Activated naive CD4-positive, alpha-beta T cell treated with anti-CD3 and anti-CD28 coated beads for 36 hours (primary cell): ENCODE measurements at regions of chr21 and their contacts with region 1.

Region 1: DNA sequence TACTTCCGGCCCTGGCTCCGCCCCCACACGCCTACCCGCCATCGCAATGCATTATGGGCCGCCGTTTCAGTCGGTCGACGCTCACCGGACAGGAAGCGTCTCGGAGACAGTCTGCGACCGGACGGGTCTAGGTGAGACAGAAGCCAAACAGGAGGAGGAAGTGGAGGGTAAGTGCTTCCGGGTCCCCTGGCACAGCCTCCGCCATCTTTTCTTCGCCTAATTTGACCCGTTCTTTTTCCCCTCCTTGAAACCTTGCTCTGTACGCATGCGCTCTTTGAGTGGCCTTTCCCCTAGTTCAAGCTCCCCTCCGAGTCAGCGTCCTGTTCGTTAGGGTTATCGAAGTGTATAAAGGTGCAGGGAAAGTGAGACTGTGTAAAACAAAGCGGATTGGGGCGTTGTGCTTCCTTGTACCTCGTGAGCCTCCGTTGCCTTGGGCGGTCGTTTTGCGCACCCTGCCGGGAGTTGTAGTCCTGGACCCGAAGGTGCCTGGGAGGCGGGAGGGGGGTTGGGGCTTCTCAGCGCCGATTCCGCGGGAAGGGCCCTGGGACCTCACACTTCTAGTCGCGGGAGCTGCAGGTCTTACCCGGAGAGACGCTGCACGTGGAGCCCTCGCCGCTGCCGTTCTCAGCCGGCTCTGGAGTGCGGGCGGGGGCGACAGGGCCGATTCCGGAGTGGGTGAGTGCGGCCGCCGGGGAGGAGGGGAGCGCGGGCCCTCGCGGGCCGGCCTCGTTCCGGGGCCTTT is at the starts of genes ATP5PF and GABPA:
- DNase-seq: peak; percentile 99
- H3K4me3 Mint-ChIP-seq: peak within 1 kb of the TSS; percentile 94
- H3K27ac Mint-ChIP-seq: peak within 1 kb of the TSS; percentile 99
- H3K4me1 Mint-ChIP-seq: peaks cover 48% of the 10 kb centered on the region
- H3K27me3 Mint-ChIP-seq: no peaks in the 10 kb centered on the region
- total RNA-seq, gene ATP5PF: 124 to 132 TPM
- total RNA-seq, gene GABPA: 18.5 to 21.2 TPM

Region 2: GRCh38 chr21:25457411-25457810 is 277.7 kb before region 1 on chr21:
- CTCF ChIA-PET with region 1: no interaction called
- intact Hi-C with region 1: loop called (anchors 1 kb)
- DNase-seq: no peak
- H3K4me3 Mint-ChIP-seq: peak overlapping the region; percentile 48
- H3K27ac Mint-ChIP-seq: peak overlapping the region; percentile 84
- H3K4me1 Mint-ChIP-seq: peaks cover 74% of the 10 kb centered on the region
- H3K27me3 Mint-ChIP-seq: no peaks in the 10 kb centered on the region

Region 3: GRCh38 chr21:25507522-25507921 is 227.6 kb before region 1 on chr21:
- CTCF ChIA-PET with region 1: no interaction called
- intact Hi-C with region 1: loop called (anchors 1 kb)
- DNase-seq: peak; percentile 55
- H3K4me3 Mint-ChIP-seq: no peak overlapping the region
- H3K27ac Mint-ChIP-seq: peak overlapping the region; percentile 70
- H3K4me1 Mint-ChIP-seq: peaks cover 75% of the 10 kb centered on the region
- H3K27me3 Mint-ChIP-seq: no peaks in the 10 kb centered on the region

Region 4: GRCh38 chr21:25573409-25574206 is 161.5 kb before region 1 on chr21:
- CTCF ChIA-PET with region 1: no interaction called
- intact Hi-C with region 1: loop called (anchors 1 kb)
- DNase-seq: peak; percentile 82
- H3K4me3 Mint-ChIP-seq: peak overlapping the region; percentile 72
- H3K27ac Mint-ChIP-seq: peak overlapping the region; percentile 95
- H3K4me1 Mint-ChIP-seq: peaks cover 73% of the 10 kb centered on the region
- H3K27me3 Mint-ChIP-seq: no peaks in the 10 kb centered on the region

Region 5: DNA sequence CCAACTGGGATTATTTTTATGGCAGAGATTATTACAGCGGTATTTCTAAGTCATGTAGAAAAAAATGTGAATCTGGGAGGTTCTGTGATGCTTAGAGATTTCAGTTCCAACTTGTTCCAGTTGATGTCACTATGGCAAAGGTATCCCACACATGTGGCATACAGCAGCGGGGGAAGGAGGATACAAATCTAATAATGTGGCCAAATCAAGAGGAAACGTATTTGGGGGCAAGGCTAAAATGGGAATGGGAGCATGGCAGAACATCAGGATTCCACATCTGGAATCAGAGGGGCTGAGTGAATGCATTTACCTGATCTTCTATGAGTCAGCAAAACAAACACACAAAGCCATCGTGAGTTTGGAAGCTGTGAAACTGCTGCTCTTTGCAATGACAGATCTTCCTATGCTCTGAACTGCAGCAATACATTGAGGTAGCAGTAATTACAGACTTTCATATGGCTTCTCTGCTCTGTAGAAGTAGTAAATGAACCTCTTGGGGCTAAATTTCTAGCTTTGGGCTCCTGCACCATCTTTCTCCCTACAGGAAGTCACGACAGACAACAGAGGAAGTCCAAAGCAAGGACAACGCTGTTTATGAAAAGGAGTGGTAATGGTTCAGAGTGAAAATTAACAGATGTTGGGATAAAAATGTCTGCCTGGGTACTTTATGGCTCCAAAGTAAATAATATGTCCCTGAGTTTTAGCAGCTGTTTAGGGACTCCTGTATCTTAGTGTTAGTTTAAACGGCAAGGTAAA is 55.2 kb after region 1 on chr21:
- CTCF ChIA-PET with region 1: no interaction called
- intact Hi-C with region 1: loop called (anchors 1 kb)
- DNase-seq: peak; percentile 43
- H3K4me3 Mint-ChIP-seq: peak overlapping the region; percentile 66
- H3K27ac Mint-ChIP-seq: peak overlapping the region; percentile 22
- H3K4me1 Mint-ChIP-seq: peaks cover 11% of the 10 kb centered on the region
- H3K27me3 Mint-ChIP-seq: peaks cover 4% of the 10 kb centered on the region

Region 6: GRCh38 chr21:25837533-25838265 is 102.6 kb after region 1 on chr21:
- CTCF ChIA-PET with region 1: no interaction called
- intact Hi-C with region 1: no loop called
- DNase-seq: no peak
- H3K4me3 Mint-ChIP-seq: no peak overlapping the region
- H3K27ac Mint-ChIP-seq: no peak overlapping the region
- H3K4me1 Mint-ChIP-seq: no peaks in the 10 kb centered on the region
- H3K27me3 Mint-ChIP-seq: no peaks in the 10 kb centered on the region

Region 7: DNA sequence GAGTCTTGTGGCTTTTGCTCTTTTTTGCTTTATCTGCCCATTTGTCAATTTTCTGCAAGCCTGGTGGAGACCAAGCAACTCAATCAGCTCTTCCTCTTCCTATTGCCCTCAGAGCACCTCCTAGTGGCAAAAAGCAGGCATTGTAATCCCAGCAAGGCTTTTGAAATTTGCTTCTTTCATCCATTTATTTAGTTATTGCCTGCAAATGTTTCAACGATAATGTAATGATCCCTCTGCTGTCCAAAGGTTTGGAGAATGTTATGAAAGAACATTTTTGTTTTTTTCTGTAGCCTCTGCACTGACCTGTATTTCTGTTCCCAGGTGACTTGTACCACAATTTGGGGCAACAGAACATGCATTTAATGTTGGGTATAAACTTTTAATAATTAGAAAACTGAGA is 127.5 kb after region 1 on chr21:
- CTCF ChIA-PET with region 1: no interaction called
- intact Hi-C with region 1: loop called (anchors 1 kb)
- DNase-seq: peak; percentile 49
- H3K4me3 Mint-ChIP-seq: no peak overlapping the region
- H3K27ac Mint-ChIP-seq: no peak overlapping the region
- H3K4me1 Mint-ChIP-seq: no peaks in the 10 kb centered on the region
- H3K27me3 Mint-ChIP-seq: no peaks in the 10 kb centered on the region